ENCODE measurements at regions of chr12 and their contacts with region 1.

Region 1: GRCh38 chr12:57584690-57585089 is 6.3 kb upstream of the PIP4K2C start:
- DNase-seq: no peak
- H3K4me3 ChIP-seq: no peak overlapping the region
- CTCF ChIP-seq: no peak

Region 2: GRCh38 chr12:57627501-57628279 is 43.0 kb after region 1 on chr12:
- in situ Hi-C with region 1: loop called (anchors 5 kb)
- DNase-seq: no peak
- H3K4me3 ChIP-seq: no peak overlapping the region
- CTCF ChIP-seq: no peak

Measured in astrocyte of the cerebellum (primary cell).